ENCODE measurements at regions of chr14 and their contacts with region 1.

Region 1: GRCh38 chr14:32252030-32252670 is 49.1 kb upstream of the RNU6-8 start:
- DNase-seq: no peak
- H3K4me3 ChIP-seq: no peak overlapping the region
- CTCF ChIP-seq: peak; percentile 74

Region 2: GRCh38 chr14:31456841-31457664 is 795.1 kb before region 1 on chr14 and contains the start of gene DTD2:
- CTCF ChIA-PET with region 1: interaction called, 11 read pairs
- POLR2A ChIA-PET with region 1: no interaction called
- DNase-seq: peak; percentile 38
- H3K4me3 ChIP-seq: peak within 1 kb of the TSS; percentile 79
- CTCF ChIP-seq: no peak

Region 3: DNA sequence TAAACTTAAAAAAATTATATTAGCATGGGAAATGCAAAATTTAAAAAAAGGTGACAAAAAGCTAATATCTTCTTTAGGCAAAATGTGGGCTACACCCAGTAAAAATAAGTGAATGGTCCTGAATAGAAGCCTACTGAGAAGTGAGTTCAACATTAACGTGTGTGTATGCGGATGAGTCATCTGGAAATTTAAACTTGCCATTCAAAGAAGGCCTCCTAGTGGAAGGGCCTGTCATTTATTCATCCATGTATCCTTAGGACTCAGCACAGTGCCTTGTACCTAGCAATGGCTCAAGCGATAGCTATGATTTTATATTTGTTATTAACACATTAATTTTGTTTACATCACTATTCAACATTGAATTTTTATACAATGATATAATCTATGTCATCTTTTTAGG is 464.8 kb before region 1 on chr14:
- CTCF ChIA-PET with region 1: no interaction called
- POLR2A ChIA-PET with region 1: no interaction called
- DNase-seq: no peak
- H3K4me3 ChIP-seq: no peak overlapping the region
- CTCF ChIP-seq: no peak

Region 4: DNA sequence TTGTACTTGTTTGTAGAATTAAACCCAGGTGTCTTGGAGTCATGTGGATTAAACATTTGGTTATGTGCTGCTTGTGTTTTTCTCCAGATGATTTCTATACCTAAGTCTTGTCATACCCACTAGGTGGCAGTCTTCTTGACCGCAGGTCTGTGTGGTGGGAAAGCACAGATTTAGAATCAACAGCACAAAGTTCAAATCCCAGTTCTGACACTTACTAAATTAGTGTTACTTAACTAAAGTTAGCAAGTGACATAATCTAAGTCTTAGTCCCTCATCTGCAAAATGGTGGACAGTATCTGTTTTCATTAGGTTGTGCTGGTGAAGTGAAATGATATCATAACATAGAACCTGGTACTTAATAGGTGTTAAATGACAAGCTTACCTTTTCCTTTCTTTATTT is 326.0 kb before region 1 on chr14:
- CTCF ChIA-PET with region 1: interaction called, 21 read pairs
- POLR2A ChIA-PET with region 1: no interaction called
- DNase-seq: no peak
- H3K4me3 ChIP-seq: no peak overlapping the region
- CTCF ChIP-seq: peak; percentile 32

Region 5: GRCh38 chr14:32076278-32077080 is 175.7 kb before region 1 on chr14:
- CTCF ChIA-PET with region 1: interaction called, 236 read pairs
- POLR2A ChIA-PET with region 1: no interaction called
- DNase-seq: peak; percentile 69
- H3K4me3 ChIP-seq: peak overlapping the region; percentile 89
- CTCF ChIP-seq: no peak

Region 6: DNA sequence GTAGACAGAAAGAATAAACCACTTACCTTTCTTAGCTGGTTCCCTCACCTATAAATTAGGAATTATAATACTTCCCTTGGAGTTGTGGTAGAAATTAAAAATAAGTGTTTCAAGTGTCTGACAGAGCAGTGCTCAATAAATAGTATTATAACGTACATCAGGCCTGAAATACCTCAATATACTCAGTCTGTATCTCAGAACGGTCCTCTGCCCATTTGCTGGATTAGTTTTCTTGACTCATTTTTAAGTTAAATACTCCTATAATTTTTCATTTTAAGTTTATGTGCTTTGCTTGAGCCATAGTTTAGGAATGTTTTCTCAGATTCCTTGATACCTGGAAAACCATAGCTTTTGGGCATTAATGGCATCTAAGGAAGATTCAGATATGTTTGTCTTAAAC is 152.7 kb before region 1 on chr14:
- CTCF ChIA-PET with region 1: no interaction called
- POLR2A ChIA-PET with region 1: no interaction called
- DNase-seq: no peak
- H3K4me3 ChIP-seq: no peak overlapping the region
- CTCF ChIP-seq: no peak

Region 7: GRCh38 chr14:32186248-32186647 is 65.9 kb before region 1 on chr14:
- CTCF ChIA-PET with region 1: no interaction called
- POLR2A ChIA-PET with region 1: no interaction called
- DNase-seq: no peak
- H3K4me3 ChIP-seq: no peak overlapping the region
- CTCF ChIP-seq: no peak

Region 8: GRCh38 chr14:32382704-32383103 is 130.6 kb after region 1 on chr14:
- CTCF ChIA-PET with region 1: interaction called, 16 read pairs
- POLR2A ChIA-PET with region 1: no interaction called
- DNase-seq: no peak
- H3K4me3 ChIP-seq: no peak overlapping the region
- CTCF ChIP-seq: peak; percentile 67

Region 9: GRCh38 chr14:32560209-32560857 is 308.2 kb after region 1 on chr14:
- CTCF ChIA-PET with region 1: interaction called, 42 read pairs
- POLR2A ChIA-PET with region 1: no interaction called
- DNase-seq: peak; percentile 64
- H3K4me3 ChIP-seq: no peak overlapping the region
- CTCF ChIP-seq: peak; percentile 74

Measured in AG04449 (cell line).